ENCODE measurements at regions of chr18 and their contacts with region 1.

Region 1: GRCh38 chr18:839224-840022 is 27.4 kb upstream of the YES1 start:
- H3K4me3 ChIP-seq: no peak overlapping the region
- H3K27ac ChIP-seq: no peak overlapping the region
- H3K4me1 ChIP-seq: no peaks in the 10 kb centered on the region
- CTCF ChIP-seq: peak; percentile 88

Region 2: DNA sequence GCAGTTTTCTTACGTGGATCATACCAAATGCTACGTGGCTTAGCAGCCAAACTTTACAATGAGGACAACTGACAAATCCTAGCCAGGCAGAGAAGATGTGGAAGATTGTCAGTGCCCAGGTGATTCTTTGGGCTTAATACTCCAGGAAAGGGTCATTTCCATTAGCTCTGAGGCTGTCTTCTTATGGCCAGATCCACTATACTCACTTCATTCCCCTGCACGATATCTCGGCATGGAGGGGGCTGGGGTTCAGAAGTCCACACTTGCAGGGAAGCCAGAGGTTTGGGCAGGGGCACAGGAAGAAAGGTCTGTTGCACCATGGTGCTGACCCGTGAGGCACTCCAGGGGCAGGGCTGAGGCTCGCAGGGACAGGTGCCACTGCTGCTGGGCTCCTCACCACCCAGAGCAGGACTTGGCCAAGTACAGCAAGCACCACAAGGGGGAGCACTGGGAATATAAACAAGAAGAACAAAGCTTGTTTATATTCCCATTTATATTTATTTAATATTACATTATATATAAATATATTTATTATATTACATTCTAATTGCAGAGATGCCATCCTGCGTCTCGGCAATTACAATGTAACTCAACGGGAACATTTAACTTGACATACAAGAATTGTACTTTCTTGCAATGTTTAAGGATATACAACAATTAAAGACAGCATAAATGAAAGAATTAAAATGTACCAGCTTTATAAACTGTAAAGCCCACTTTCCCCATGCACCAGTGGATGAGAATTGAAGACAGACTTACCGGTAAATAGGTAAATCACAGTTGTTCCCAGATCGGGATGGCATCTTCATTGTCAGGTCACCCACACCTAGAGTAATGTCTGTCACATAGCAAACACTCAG is 215.4 kb before region 1 on chr18:
- CTCF ChIA-PET with region 1: interaction called, 184 read pairs
- POLR2A ChIA-PET with region 1: no interaction called
- H3K4me3 ChIP-seq: no peak overlapping the region
- H3K27ac ChIP-seq: no peak overlapping the region
- H3K4me1 ChIP-seq: no peaks in the 10 kb centered on the region
- CTCF ChIP-seq: no peak

Region 3: GRCh38 chr18:697800-698199 is 141.6 kb before region 1 on chr18:
- CTCF ChIA-PET with region 1: interaction called, 18 read pairs
- POLR2A ChIA-PET with region 1: no interaction called
- H3K4me3 ChIP-seq: no peak overlapping the region
- H3K27ac ChIP-seq: no peak overlapping the region
- H3K4me1 ChIP-seq: peaks cover 9% of the 10 kb centered on the region
- CTCF ChIP-seq: no peak

Region 4: GRCh38 chr18:741931-742512 is 97.4 kb before region 1 on chr18:
- CTCF ChIA-PET with region 1: interaction called, 230 read pairs
- POLR2A ChIA-PET with region 1: interaction called, 4 read pairs
- H3K4me3 ChIP-seq: no peak overlapping the region
- H3K27ac ChIP-seq: no peak overlapping the region
- H3K4me1 ChIP-seq: no peaks in the 10 kb centered on the region
- CTCF ChIP-seq: peak; percentile 65; the same call in 1 of the 2 replicates

Region 5: GRCh38 chr18:750456-750855 is 89.0 kb before region 1 on chr18:
- CTCF ChIA-PET with region 1: interaction called, 230 read pairs
- POLR2A ChIA-PET with region 1: no interaction called
- H3K4me3 ChIP-seq: no peak overlapping the region
- H3K27ac ChIP-seq: no peak overlapping the region
- H3K4me1 ChIP-seq: peaks cover 3% of the 10 kb centered on the region; the same call in 1 of the 2 replicates
- CTCF ChIP-seq: no peak

Region 6: DNA sequence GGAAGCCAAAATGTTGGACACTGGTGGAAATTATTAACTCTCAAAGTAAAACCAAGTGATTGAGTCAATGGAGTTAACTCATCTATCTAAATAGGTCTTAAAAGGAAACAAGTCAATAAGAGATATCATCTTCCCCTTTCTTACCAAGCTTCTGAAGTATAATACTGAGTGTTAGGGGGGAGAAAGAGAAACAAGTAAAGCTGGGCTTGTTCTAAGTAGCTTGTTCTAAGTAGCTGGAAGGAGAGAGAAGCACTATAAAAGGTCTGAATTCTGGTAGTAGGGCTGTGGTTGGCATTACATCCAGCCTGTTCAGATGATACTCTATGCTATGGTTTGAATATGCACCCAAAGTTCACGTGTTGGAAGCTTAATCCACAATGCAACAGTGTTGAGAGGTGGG is 54.2 kb before region 1 on chr18:
- CTCF ChIA-PET with region 1: interaction called, 10 read pairs
- POLR2A ChIA-PET with region 1: no interaction called
- H3K4me3 ChIP-seq: no peak overlapping the region
- H3K27ac ChIP-seq: no peak overlapping the region
- H3K4me1 ChIP-seq: no peaks in the 10 kb centered on the region
- CTCF ChIP-seq: no peak

Region 7: DNA sequence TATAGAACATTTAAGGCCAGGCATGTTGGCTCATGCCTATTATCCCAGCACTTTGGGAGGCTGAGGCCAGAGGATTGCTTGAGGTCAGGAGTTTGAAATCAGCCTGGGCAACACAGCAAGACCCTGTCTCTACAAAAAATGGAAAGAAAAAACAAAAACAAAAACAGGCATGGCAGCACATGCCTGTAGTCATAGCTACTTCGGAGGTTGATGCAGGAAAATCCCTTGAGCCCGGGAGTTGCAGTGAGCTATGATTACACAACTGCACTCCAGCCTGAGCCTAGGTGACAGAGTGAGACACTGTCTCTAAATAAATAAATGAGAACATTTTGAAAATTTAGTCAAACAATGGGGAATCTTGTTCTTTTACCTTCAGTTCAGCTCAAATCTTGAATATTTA is 15.2 kb before region 1 on chr18:
- CTCF ChIA-PET with region 1: interaction called, 64 read pairs
- POLR2A ChIA-PET with region 1: no interaction called
- H3K4me3 ChIP-seq: no peak overlapping the region
- H3K27ac ChIP-seq: no peak overlapping the region
- H3K4me1 ChIP-seq: no peaks in the 10 kb centered on the region
- CTCF ChIP-seq: no peak

Region 8: GRCh38 chr18:877238-877637 is 37.8 kb after region 1 on chr18:
- CTCF ChIA-PET with region 1: no interaction called
- POLR2A ChIA-PET with region 1: no interaction called
- H3K4me3 ChIP-seq: no peak overlapping the region
- H3K27ac ChIP-seq: no peak overlapping the region
- H3K4me1 ChIP-seq: no peaks in the 10 kb centered on the region
- CTCF ChIP-seq: no peak

Region 9: DNA sequence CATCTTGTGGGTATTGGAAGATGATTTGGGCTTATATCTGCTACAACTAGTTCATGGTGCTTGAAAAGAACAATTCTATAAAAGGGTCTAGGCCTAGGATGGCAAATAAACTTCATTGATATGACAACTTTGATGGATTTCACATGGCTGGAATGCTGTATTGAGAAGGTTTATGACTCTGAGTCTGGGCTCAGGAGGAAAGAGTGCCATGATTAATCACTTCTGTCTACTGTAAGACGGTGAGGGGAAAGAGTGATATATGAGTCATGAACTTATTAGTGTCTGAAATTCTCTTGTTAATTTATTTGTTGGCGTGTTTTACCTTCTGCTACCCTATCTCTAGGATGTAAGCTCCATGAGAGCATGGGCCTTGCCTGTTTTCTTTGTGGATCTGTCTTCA is 48.3 kb after region 1 on chr18:
- CTCF ChIA-PET with region 1: no interaction called
- POLR2A ChIA-PET with region 1: no interaction called
- H3K4me3 ChIP-seq: no peak overlapping the region
- H3K27ac ChIP-seq: no peak overlapping the region
- H3K4me1 ChIP-seq: no peaks in the 10 kb centered on the region
- CTCF ChIP-seq: no peak